ENCODE measurements at regions of chr11 and their contacts with region 1.

Region 1: DNA sequence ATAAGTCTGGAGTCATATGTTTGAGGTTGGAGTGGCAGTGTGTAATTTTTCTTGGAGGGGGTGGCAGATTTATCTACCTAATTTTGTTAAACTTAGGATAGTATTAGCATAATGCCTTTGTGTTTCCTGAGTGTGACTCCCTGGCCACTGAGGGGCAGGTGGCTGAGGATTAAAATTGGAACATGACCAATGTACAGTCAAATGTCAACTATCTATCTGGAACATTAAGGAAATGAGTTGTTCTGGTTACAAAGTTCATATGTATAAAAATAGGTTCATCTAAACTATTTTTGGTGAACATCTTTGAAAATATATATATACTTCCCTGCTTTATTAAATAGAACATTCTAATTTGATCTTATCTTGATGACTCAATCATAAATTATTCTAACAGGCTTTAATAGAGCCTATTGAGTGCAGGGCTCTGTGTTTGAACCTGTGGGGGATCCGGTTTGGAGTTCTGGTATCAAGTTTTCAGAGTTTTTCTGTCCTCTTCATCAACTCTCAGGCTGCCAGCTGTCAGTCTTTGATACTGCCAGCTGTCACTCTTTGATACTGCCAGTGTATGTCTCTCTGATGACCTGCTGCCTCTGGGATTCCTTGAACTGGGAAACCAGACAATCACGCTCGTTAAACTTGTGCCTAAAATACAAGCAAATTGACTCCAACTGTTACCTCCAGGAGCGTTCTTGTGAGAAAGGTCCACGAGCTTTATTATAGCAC is 309.6 kb downstream of the METTL15 start:
- DNase-seq: no peak
- ATAC-seq: peak in 2 of 8 donors; percentile 39 to 73
- H3K4me3 ChIP-seq: no peak overlapping the region
- H3K27ac ChIP-seq: no peak overlapping the region
- H3K4me1 ChIP-seq: peaks cover 0 to 23% (median 0%) of the 10 kb centered on the region in 9 donors
- H3K27me3 ChIP-seq: no peaks in the 10 kb centered on the region
- CTCF ChIP-seq: no peak

Region 2: DNA sequence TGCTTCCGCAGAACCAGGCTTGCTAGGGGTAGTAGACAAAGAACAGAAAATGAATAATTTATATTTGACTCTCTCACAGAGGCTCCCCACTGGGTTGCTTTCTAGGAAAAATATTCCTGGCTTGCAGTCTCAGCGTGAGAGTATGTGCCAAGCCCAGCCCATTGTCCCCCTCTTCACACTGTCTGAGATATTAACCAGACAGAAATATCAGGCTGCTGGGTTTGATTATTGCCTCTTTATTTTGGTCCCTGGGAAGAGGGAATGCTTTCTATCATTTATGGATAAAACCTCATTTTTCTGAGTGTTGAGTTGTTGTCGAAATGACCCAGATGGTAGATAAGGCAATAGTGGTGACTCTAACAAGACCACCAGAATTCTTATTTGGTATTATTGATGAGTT is 58.3 kb after region 1 on chr11:
- intact Hi-C with region 1: loop called in 1 of 10 experiments (anchors 10 kb)
- DNase-seq: peak in 1 of 2 donors; percentile 30
- ATAC-seq: peak; percentile 52 to 92 (median 88)
- H3K4me3 ChIP-seq: no peak overlapping the region
- H3K27ac ChIP-seq: no peak overlapping the region
- H3K4me1 ChIP-seq: peaks cover 0 to 8% (median 0%) of the 10 kb centered on the region in 9 donors
- H3K27me3 ChIP-seq: no peaks in the 10 kb centered on the region
- CTCF ChIP-seq: no peak

Region 3: GRCh38 chr11:28581286-28582242 is 163.8 kb after region 1 on chr11:
- intact Hi-C with region 1: no loop called
- DNase-seq: no peak
- ATAC-seq: no peak
- H3K4me3 ChIP-seq: no peak overlapping the region
- H3K27ac ChIP-seq: no peak overlapping the region
- H3K4me1 ChIP-seq: no peaks in the 10 kb centered on the region
- H3K27me3 ChIP-seq: no peaks in the 10 kb centered on the region
- CTCF ChIP-seq: no peak